Gastrocnemius medialis (tissue), 4 donors: ENCODE measurements at regions of chr5 and their contacts with region 1.

Region 1: DNA sequence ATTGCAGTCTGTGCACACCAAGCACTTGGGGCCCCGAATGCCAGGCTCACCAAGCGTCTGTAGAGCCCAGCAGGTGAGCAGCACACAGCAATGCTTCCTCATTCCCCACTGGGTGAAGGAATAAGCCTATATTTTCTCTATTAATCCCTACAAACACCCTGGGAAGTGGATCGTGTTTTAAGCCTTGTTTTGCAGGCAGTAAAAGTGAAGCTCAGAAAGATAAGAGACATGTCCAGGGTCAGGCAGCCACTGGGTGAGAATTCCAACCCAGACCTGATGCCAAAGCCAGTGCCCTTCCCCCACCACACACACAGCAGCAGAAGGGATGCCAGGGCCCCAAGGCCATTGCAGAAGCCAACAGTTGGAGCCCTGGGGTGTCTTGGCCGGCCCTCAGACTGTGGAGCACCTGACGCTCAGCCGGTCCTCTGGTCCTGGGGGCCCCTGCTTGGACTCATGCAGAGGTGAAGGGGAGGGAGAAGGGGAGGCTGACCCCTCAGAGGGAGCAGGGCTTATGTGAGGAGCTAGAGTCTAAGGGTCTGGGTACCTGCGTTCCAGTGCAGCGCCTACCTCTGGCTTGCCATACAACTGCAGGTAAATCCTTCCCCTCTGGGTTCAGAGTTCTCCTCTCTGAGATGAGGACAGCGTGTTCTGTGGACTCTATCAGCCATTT is 26.3 kb upstream of the SYNPO start:
- DNase-seq: no peak
- ATAC-seq: no peak
- H3K4me3 ChIP-seq: no peak overlapping the region
- H3K27ac ChIP-seq: peak overlapping the region; percentile 94 to 98 (median 97)
- H3K4me1 ChIP-seq: peaks cover 97% of the 10 kb centered on the region in 2 donors
- H3K27me3 ChIP-seq: no peaks in the 10 kb centered on the region
- CTCF ChIP-seq: no peak
- POLR2A ChIP-seq: no peak

Region 2: DNA sequence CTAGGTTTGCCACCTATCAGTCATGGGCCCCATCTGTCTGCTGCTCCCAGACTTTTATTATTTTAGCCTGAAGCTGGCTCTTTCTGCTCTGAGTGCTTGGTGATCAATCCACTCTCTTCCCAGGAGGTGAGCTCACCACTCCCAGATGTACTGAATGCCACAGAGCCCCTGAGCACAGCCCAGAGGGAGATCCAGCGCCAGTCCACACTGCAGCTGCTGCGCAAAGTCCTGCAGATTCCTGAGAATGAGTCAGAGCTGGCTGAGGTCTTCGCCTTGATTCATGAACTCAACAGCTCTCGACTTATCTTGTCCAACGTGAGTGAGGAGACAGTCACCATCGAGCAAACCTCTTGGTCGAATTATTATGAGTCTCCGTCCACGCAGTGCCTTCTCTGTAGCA is 577.6 kb before region 1 on chr5:
- in situ Hi-C with region 1: no loop called
- intact Hi-C with region 1: no loop called
- DNase-seq: peak; percentile 54 to 84
- ATAC-seq: peak; percentile 97 to 100
- H3K4me3 ChIP-seq: no peak overlapping the region
- H3K27ac ChIP-seq: peak overlapping the region; percentile 50 to 74 (median 63)
- H3K4me1 ChIP-seq: peaks cover 15 to 19% of the 10 kb centered on the region in 2 donors
- H3K27me3 ChIP-seq: no peaks in the 10 kb centered on the region
- CTCF ChIP-seq: no peak
- POLR2A ChIP-seq: no peak

Region 3: DNA sequence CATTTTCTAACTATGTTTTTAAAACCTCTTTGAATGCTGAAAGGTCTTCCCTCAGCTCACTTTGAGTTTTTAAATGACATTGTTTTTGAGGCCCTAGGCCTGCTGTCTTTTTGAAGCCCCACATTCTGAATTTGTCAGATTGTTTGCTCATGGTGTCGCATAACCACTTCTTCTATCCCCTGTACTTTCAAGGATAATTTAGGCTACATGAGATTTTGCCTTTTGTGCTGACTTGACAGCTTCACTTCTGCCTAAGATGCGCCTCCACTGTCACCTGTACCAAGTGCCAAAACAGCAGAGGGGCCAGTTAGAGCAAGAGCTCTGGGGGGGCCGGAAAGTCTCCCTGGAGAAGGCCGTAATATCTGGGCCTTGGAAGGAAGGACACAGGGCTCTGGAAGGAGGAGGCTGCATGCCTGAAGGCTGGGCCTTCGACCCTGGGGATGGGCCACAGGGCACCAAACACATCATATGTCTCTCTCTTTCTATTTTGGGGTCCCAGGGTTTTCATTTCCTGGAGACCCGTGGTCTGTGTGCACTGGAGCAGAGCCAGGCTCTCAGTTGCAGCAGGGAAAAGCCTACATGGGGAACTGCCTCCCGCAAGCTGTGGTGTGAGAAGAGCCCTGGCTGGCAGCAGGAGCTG is 57.1 kb before region 1 on chr5:
- in situ Hi-C with region 1: no loop called
- intact Hi-C with region 1: no loop called
- DNase-seq: no peak
- ATAC-seq: no peak
- H3K4me3 ChIP-seq: no peak overlapping the region
- H3K27ac ChIP-seq: peak overlapping the region in 3 of 4 donors; percentile 44 to 71 (median 51)
- H3K4me1 ChIP-seq: peaks cover 16 to 19% of the 10 kb centered on the region in 2 donors
- H3K27me3 ChIP-seq: no peaks in the 10 kb centered on the region
- CTCF ChIP-seq: no peak
- POLR2A ChIP-seq: no peak

Region 4: DNA sequence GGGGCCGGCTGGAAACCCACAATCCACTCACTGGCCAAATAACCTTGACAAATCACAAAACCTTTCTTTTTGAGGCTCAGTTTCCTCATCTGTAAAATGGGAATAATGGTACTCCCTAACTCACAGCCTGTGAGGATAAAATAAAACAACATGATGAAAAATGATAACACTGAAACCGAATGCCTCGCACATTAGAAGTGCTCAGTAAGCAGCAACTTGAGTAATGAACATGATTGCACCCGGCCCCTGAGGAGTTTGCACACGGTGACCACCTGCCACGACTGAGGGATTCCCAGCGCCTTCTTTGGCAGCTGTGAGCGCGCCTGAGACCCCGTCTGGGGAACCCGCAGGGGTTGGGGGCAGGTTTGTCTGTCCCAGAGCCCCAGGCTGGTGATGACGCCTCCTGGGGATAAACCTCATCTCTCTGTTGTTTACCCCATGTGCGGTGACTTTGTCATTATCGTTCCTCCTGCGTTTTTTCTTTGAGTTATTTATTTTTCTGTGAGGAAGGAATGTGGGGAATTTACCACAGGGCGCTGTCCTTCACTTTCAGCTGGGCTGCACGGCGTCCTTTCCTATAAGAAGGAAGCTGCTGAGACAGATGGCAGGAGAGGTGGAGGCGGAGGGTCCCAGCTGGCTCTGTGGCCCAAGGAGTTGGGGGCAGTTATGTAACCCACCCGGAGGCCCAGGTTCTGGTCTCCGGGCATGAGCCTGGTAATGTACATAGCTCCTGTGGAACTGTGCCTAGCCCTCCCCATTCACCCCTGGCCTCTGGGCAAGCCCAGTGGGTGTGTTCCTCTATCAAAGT is 23.3 kb after region 1 on chr5:
- in situ Hi-C with region 1: no loop called
- intact Hi-C with region 1: loop called (anchors 1 kb)
- DNase-seq: no peak
- ATAC-seq: peak in 1 of 2 donors; percentile 9
- H3K4me3 ChIP-seq: no peak overlapping the region
- H3K27ac ChIP-seq: peak overlapping the region; percentile 96 to 100 (median 100)
- H3K4me1 ChIP-seq: peaks cover 82 to 94% of the 10 kb centered on the region in 2 donors
- H3K27me3 ChIP-seq: no peaks in the 10 kb centered on the region
- CTCF ChIP-seq: no peak
- POLR2A ChIP-seq: no peak

Region 5: GRCh38 chr5:150645077-150645700 is 31.1 kb after region 1 on chr5:
- in situ Hi-C with region 1: no loop called
- intact Hi-C with region 1: loop called (anchors 5 kb)
- DNase-seq: peak in 1 of 2 donors; percentile 69
- ATAC-seq: peak in 1 of 2 donors; percentile 8
- H3K4me3 ChIP-seq: no peak overlapping the region
- H3K27ac ChIP-seq: peak overlapping the region; percentile 96 to 100 (median 100)
- H3K4me1 ChIP-seq: peaks cover 88 to 93% of the 10 kb centered on the region in 2 donors
- H3K27me3 ChIP-seq: no peaks in the 10 kb centered on the region
- CTCF ChIP-seq: no peak
- POLR2A ChIP-seq: no peak